GM12878 (cell line): ENCODE measurements at regions of chr15 and their contacts with region 1.

Region 1: GRCh38 chr15:85402195-85402881 is 21.9 kb downstream of the AKAP13 start:
- DNase-seq: no peak
- ATAC-seq: peak; percentile 64
- H3K4me3 ChIP-seq: peak overlapping the region; percentile 32; the same call in 1 of the 2 replicates
- H3K27ac ChIP-seq: peak overlapping the region; percentile 75
- H3K4me1 ChIP-seq: peaks cover 58% of the 10 kb centered on the region
- H3K27me3 ChIP-seq: no peaks in the 10 kb centered on the region
- CTCF ChIP-seq: no peak
- EP300 ChIP-seq: no peak
- POLR2A ChIP-seq: no peak
- RAD21 ChIP-seq: no peak

Region 2: GRCh38 chr15:85388566-85389305 is 13.6 kb before region 1 on chr15:
- CTCF ChIA-PET with region 1: interaction called, 15 read pairs
- POLR2A ChIA-PET with region 1: interaction called, 12 read pairs
- RAD21 ChIA-PET with region 1: interaction called, 62 read pairs
- SMC1A ChIA-PET with region 1: interaction called, 55 read pairs
- in situ Hi-C with region 1: no loop called
- intact Hi-C with region 1: loop called (anchors 2 kb)
- DNase-seq: no peak
- ATAC-seq: no peak; the same call in 2 of the 3 replicates
- H3K4me3 ChIP-seq: peak overlapping the region; percentile 49; the same call in 1 of the 2 replicates
- H3K27ac ChIP-seq: no peak overlapping the region
- H3K4me1 ChIP-seq: peaks cover 24% of the 10 kb centered on the region
- H3K27me3 ChIP-seq: no peaks in the 10 kb centered on the region
- CTCF ChIP-seq: no peak
- EP300 ChIP-seq: no peak
- POLR2A ChIP-seq: no peak
- RAD21 ChIP-seq: no peak

Region 3: DNA sequence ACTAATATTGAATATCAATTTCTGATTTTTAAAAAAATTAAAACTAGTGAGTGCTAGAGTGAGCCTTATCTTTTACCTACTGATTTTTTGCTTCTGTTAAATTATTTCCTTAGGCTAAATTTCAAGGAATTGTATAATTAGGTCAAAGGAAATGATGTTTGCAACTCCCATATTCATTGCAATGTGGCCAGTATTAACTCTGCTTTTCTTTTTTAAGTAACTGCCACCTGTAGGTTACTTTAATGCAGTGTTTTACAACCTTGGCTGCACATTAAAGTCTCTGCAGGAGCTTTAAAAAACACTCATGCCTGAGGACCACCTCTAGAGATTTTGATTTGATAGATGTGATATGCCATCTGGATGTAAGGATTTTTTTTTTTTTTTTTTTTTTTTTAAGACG is 158.3 kb after region 1 on chr15:
- CTCF ChIA-PET with region 1: no interaction called
- POLR2A ChIA-PET with region 1: interaction called, 11 read pairs
- RAD21 ChIA-PET with region 1: no interaction called
- SMC1A ChIA-PET with region 1: interaction called, 3 read pairs
- in situ Hi-C with region 1: no loop called
- intact Hi-C with region 1: no loop called
- DNase-seq: no peak
- ATAC-seq: no peak
- H3K4me3 ChIP-seq: no peak overlapping the region
- H3K27ac ChIP-seq: no peak overlapping the region
- H3K4me1 ChIP-seq: peaks cover 11% of the 10 kb centered on the region
- H3K27me3 ChIP-seq: no peaks in the 10 kb centered on the region
- CTCF ChIP-seq: no peak
- EP300 ChIP-seq: no peak
- POLR2A ChIP-seq: no peak
- RAD21 ChIP-seq: no peak